Activated CD4-positive, alpha-beta memory T cell treated with anti-CD3 and anti-CD28 coated beads for 36 hours (primary cell): ENCODE measurements at regions of chr3 and their contacts with region 1.

Region 1: DNA sequence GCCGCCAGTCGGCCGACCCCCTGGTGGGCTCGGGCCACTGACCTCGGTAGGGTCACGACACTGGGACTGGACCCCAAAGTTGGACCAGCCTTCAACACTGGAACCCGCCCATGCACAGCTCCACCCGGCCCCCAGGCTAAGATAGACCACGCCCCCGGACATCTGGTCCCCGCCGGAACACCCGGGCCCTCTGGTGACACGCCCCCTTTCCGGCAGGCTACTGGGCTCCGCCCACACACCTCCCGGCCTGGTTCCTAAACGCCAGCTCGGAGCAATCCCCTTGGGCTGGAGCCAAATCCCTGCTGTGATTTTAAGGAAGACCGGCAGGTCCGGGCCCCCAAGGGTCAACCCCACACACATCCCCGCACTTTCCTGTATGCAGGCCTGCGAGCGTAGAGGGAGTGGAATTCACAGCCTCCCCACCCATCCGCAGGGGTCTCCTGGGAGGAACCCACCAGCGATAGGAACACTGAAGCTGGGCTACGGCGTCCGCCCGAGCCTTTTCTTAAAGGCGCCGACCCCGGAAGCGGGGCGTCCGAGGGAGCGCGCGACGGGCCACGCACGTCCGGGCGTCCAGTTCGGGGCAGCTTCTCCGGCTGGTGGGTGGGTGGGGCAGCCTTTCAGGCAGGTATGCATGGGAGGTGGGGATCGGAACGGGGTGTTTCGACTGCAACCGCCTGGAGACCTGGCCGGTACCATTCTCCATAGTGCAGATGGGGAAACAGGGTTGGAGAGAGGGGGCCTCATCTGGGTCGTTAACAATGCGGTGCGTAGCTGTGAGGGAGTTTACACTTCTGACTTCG is at the start of gene HEMK1:
- DNase-seq: peak; percentile 98
- H3K4me3 Mint-ChIP-seq: peak within 1 kb of the TSS; percentile 99
- H3K27ac Mint-ChIP-seq: peak within 1 kb of the TSS; percentile 95
- H3K4me1 Mint-ChIP-seq: peaks cover 56% of the 10 kb centered on the region
- H3K27me3 Mint-ChIP-seq: no peaks in the 10 kb centered on the region
- total RNA-seq, gene HEMK1: 78.7 to 82.6 TPM

Region 2: GRCh38 chr3:50260027-50260941 is 308.9 kb before region 1 on chr3:
- CTCF ChIA-PET with region 1: no interaction called
- POLR2A ChIA-PET with region 1: no interaction called
- intact Hi-C with region 1: no loop called
- DNase-seq: peak; percentile 92
- H3K4me3 Mint-ChIP-seq: peak overlapping the region; percentile 59
- H3K27ac Mint-ChIP-seq: peak overlapping the region; percentile 69
- H3K4me1 Mint-ChIP-seq: peaks cover 6% of the 10 kb centered on the region
- H3K27me3 Mint-ChIP-seq: no peaks in the 10 kb centered on the region

Region 3: DNA sequence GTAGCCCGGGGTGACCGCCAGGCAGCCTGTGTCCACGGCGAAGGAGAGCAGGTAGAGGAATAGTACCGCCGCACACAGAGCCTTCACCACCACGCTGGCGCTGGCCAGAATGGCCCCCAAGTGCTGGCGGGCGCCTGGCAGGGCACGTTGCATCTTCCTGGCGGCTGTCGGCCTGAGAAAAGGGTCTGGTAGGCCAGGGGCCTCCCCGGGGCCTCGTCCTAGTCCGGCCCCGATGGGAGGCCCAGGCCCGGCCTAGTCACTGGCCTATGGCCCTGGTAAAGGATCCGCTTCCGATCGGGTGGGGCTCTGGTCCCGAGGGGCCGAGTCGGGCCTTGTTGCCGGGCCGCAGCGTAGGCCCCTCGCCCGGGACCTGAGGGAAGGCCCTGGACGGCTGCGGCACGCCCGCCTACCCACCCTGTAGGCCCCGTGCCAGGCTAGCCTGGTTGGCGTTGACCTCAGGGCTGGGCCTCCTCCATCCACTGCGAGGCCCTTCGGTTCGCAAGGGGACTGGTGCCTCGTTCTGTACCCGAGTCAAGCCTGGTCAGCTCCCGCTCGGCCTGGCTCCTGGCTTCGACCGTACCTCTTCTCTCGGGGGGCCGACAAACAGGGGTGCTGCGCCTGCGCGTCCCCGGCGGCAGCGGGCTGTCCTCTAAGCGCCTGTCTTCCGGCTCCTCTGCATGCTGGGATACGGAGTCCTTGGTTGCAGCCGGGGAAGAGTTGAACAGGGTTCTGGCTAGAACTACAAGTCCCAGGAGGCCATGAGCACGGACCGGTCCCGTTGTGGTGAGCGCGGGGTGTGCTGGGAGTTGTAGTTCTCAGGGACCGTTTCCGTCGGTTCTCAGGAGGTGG is 210.0 kb before region 1 on chr3 and contains the start of gene TMEM115:
- CTCF ChIA-PET with region 1: no interaction called
- POLR2A ChIA-PET with region 1: no interaction called
- intact Hi-C with region 1: loop called (anchors 5 kb)
- DNase-seq: peak; percentile 97
- H3K4me3 Mint-ChIP-seq: peak within 1 kb of the TSS; percentile 95
- H3K27ac Mint-ChIP-seq: peak within 1 kb of the TSS; percentile 86
- H3K4me1 Mint-ChIP-seq: peaks cover 39% of the 10 kb centered on the region
- H3K27me3 Mint-ChIP-seq: no peaks in the 10 kb centered on the region
- total RNA-seq, gene TMEM115: 16.0 TPM

Region 4: GRCh38 chr3:50580683-50581458 is 11.7 kb after region 1 on chr3:
- CTCF ChIA-PET with region 1: interaction called, 317 read pairs
- POLR2A ChIA-PET with region 1: interaction called, 510 read pairs
- intact Hi-C with region 1: no loop called
- DNase-seq: no peak
- H3K4me3 Mint-ChIP-seq: no peak overlapping the region
- H3K27ac Mint-ChIP-seq: peak overlapping the region; percentile 28
- H3K4me1 Mint-ChIP-seq: peaks cover 63% of the 10 kb centered on the region
- H3K27me3 Mint-ChIP-seq: no peaks in the 10 kb centered on the region

Region 5: GRCh38 chr3:50600841-50601591 is 31.9 kb after region 1 on chr3:
- CTCF ChIA-PET with region 1: interaction called, 908 read pairs
- POLR2A ChIA-PET with region 1: interaction called, 1,013 read pairs
- intact Hi-C with region 1: loop called (anchors 1 kb)
- DNase-seq: peak; percentile 98
- H3K4me3 Mint-ChIP-seq: peak overlapping the region; percentile 98
- H3K27ac Mint-ChIP-seq: peak overlapping the region; percentile 100
- H3K4me1 Mint-ChIP-seq: peaks cover 81% of the 10 kb centered on the region
- H3K27me3 Mint-ChIP-seq: no peaks in the 10 kb centered on the region

Region 6: DNA sequence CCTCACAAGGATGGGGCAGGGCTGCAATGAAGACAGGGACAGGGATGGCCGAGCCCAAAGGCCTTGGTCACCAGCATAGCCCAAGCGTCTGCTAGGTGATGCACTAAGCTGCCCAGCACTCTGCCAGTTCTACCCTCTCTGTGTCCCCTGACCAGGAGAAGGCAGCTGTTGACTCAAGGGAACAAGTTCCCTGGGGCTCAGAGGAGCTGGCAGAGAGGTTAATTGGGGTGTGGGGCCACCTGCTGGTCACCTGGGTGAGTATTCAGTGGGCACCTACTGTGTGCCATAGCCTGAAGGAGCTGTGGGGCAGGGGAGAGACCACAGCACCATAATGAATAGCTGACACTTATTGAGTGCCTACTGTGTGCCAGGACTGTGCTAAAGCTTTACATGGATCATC is 83.6 kb after region 1 on chr3:
- CTCF ChIA-PET with region 1: interaction called, 46 read pairs
- POLR2A ChIA-PET with region 1: interaction called, 5 read pairs
- intact Hi-C with region 1: loop called (anchors 1 kb)
- DNase-seq: peak; percentile 77
- H3K4me3 Mint-ChIP-seq: no peak overlapping the region
- H3K27ac Mint-ChIP-seq: peak overlapping the region; percentile 19
- H3K4me1 Mint-ChIP-seq: peaks cover 28% of the 10 kb centered on the region
- H3K27me3 Mint-ChIP-seq: no peaks in the 10 kb centered on the region

Region 7: DNA sequence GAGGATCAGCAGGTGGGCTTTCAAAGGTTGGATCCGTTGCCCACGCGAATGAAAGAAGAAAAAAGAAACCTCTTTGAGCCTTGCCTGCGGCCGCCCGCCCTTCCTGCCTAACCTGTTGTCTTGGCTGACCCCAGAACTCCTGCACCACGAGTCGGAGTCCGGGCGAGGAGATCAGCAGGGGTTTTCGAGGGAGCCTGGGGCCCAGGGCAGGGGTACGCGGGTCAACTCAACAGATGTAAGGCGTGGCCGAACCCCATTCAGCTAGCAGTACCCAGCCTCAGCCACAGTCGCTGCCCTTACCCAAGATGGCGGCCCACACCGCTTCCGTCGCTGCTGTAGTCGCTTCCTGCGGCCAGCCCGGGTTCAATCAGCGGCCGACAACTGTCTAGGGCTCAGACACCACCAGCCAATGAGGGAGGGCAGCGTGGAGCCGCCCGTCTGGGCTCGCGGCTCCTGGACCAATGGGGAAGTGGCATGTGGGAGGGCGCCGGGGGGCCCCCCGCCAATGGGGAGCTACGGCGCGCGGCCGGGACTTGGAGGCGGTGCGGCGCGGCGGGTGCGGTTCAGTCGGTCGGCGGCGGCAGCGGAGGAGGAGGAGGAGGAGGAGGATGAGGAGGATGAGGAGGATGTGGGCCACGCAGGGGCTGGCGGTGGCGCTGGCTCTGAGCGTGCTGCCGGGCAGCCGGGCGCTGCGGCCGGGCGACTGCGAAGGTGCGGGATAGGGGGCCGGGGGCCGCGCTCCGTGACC is 815.8 kb after region 1 on chr3 and contains the start of gene MANF:
- CTCF ChIA-PET with region 1: interaction called, 12 read pairs
- POLR2A ChIA-PET with region 1: no interaction called
- intact Hi-C with region 1: loop called (anchors 1 kb)
- DNase-seq: peak; percentile 99
- H3K4me3 Mint-ChIP-seq: peak within 1 kb of the TSS; percentile 93
- H3K27ac Mint-ChIP-seq: peak within 1 kb of the TSS; percentile 98
- H3K4me1 Mint-ChIP-seq: peaks cover 50% of the 10 kb centered on the region
- H3K27me3 Mint-ChIP-seq: no peaks in the 10 kb centered on the region
- total RNA-seq, gene MANF: 151 to 162 TPM